Activated B cell treated with CpG ODN at 0.5 μM for 24 hours (primary cell): ENCODE measurements at regions of chr1 and their contacts with region 1.

Region 1: DNA sequence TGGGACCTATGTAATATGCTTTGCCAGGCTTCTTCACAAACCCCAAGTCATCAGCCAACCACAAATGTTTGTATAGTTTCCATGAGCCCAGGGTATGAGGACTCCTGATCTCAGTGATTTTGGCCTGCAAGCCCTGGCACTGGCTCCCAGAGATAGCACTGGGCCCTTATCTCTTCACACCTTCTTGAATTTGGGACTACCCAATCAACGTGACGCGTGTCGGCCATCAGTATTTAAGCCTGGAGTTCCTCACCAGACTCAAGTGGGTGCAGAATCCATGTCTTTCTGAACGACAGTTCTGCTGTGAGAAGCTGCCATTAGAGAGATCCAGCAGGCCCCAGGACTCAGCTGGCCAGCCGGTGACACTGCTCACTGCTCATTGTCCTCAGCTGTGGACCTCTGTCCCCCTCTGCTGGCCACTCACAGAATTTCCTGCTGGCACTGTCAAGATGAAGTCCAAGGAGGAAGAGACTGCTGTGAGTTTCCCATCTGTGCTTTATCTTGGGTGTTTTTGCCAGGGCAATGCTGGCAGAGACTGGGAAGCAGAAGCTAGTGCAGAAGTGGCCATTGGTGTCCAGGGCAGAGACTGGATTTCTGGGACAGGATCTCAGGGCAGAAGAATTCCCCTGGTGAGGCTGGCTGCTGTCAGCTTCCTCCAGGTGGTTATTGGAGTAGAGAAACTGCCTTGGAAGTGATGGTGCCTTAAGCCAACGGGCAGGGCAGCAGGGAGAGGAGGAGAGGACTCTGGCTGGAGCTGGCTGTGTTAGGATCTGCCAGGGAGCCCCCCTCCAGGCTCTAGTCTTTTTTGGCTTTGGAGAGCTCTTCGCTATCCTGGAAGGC is 28.4 kb downstream of the TMCC2 start:
- DNase-seq: peak; percentile 74
- ATAC-seq: peak; percentile 99
- H3K4me3 Mint-ChIP-seq: no peak overlapping the region
- H3K27ac Mint-ChIP-seq: no peak overlapping the region
- H3K4me1 Mint-ChIP-seq: no peaks in the 10 kb centered on the region
- H3K27me3 Mint-ChIP-seq: peaks cover 3% of the 10 kb centered on the region
- CTCF ChIP-seq: peak; percentile 98

Region 2: GRCh38 chr1:204826970-204827369 is 429.2 kb before region 1 on chr1:
- CTCF ChIA-PET with region 1: no interaction called
- POLR2A ChIA-PET with region 1: no interaction called
- intact Hi-C with region 1: loop called (anchors 2 kb)
- DNase-seq: no peak
- ATAC-seq: no peak
- H3K4me3 Mint-ChIP-seq: no peak overlapping the region
- H3K27ac Mint-ChIP-seq: no peak overlapping the region
- H3K4me1 Mint-ChIP-seq: peaks cover 8% of the 10 kb centered on the region
- H3K27me3 Mint-ChIP-seq: peaks cover 49% of the 10 kb centered on the region
- CTCF ChIP-seq: no peak

Region 3: DNA sequence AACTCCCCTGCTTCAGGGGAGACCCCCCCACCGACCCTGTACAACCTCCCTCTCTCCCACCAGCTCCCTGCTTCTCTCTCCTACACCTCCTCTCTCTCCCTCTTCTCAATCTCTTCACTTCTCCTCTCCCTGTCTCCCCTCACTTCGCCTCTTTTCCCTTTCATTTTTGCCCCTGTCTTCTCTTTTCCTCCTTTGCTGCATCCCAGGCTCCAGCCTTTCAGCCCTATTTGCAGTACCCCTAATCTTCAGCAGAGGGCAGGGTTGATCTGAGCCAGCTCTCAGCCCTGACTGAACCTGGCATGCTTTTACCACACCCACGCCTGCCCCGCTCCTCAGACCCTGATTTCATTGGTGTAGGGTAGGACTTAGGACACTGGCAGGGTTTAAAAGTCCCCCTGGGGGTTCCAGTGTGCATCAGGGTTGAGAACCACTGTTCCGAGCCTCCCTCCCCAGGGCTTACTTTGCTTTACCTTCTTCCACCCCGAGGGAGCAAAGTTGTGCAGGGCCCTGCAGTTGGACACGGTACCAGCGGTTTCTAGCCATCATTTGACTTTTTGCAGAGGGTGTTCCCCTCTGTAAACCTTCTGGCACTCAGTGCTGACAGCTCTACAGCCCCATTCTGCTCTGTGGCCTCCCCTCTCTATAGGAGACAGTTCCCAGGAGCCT is 280.5 kb before region 1 on chr1:
- CTCF ChIA-PET with region 1: interaction called, 50 read pairs
- POLR2A ChIA-PET with region 1: interaction called, 4 read pairs
- intact Hi-C with region 1: loop called (anchors 1 kb)
- DNase-seq: peak; percentile 38
- ATAC-seq: peak; percentile 90
- H3K4me3 Mint-ChIP-seq: no peak overlapping the region
- H3K27ac Mint-ChIP-seq: no peak overlapping the region
- H3K4me1 Mint-ChIP-seq: peaks cover 11% of the 10 kb centered on the region
- H3K27me3 Mint-ChIP-seq: peaks cover 24% of the 10 kb centered on the region
- CTCF ChIP-seq: no peak

Region 4: GRCh38 chr1:204989266-204990058 is 266.7 kb before region 1 on chr1:
- CTCF ChIA-PET with region 1: interaction called, 18 read pairs
- POLR2A ChIA-PET with region 1: no interaction called
- intact Hi-C with region 1: loop called (anchors 1 kb)
- DNase-seq: peak; percentile 34
- ATAC-seq: peak; percentile 78
- H3K4me3 Mint-ChIP-seq: no peak overlapping the region
- H3K27ac Mint-ChIP-seq: no peak overlapping the region
- H3K4me1 Mint-ChIP-seq: peaks cover 17% of the 10 kb centered on the region
- H3K27me3 Mint-ChIP-seq: peaks cover 7% of the 10 kb centered on the region
- CTCF ChIP-seq: no peak

Region 5: GRCh38 chr1:205061665-205062069 is 194.5 kb before region 1 on chr1:
- CTCF ChIA-PET with region 1: interaction called, 26 read pairs
- POLR2A ChIA-PET with region 1: no interaction called
- intact Hi-C with region 1: loop called (anchors 1 kb)
- DNase-seq: peak; percentile 53
- ATAC-seq: peak; percentile 61
- H3K4me3 Mint-ChIP-seq: peak overlapping the region; percentile 15
- H3K27ac Mint-ChIP-seq: no peak overlapping the region
- H3K4me1 Mint-ChIP-seq: no peaks in the 10 kb centered on the region
- H3K27me3 Mint-ChIP-seq: no peaks in the 10 kb centered on the region
- CTCF ChIP-seq: peak; percentile 51

Region 6: GRCh38 chr1:205141236-205142101 is 114.7 kb before region 1 on chr1:
- CTCF ChIA-PET with region 1: interaction called, 19 read pairs
- POLR2A ChIA-PET with region 1: no interaction called
- intact Hi-C with region 1: loop called (anchors 1 kb)
- DNase-seq: peak; percentile 47
- ATAC-seq: peak; percentile 79
- H3K4me3 Mint-ChIP-seq: no peak overlapping the region
- H3K27ac Mint-ChIP-seq: peak overlapping the region; percentile 57
- H3K4me1 Mint-ChIP-seq: peaks cover 27% of the 10 kb centered on the region
- H3K27me3 Mint-ChIP-seq: no peaks in the 10 kb centered on the region
- CTCF ChIP-seq: peak; percentile 24

Region 7: DNA sequence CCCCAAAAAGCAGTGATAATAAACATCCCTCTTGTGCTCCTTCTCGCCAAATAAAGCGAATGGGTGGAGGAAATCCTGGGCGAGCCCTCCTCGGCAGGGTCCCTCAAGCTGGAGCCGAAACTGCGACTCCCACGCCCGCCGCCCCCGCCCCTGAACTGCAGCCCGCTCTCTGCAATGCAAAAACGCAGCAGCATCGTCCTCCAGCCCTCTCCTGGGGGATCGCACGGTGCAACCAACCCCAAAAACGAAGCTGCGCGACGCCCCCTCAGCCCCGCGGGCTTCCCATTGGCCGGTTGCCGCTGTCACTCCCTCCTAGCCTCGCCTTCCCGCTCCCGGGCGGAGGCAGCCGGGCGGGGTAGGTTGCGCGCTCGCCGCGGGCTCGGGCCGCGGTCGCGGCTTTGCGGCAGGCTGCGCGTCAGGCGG is 28.6 kb before region 1 on chr1 and contains the start of gene TMCC2:
- CTCF ChIA-PET with region 1: interaction called, 66 read pairs
- POLR2A ChIA-PET with region 1: interaction called, 29 read pairs
- intact Hi-C with region 1: loop called (anchors 1 kb)
- DNase-seq: peak; percentile 73
- ATAC-seq: peak; percentile 88
- H3K4me3 Mint-ChIP-seq: peak within 1 kb of the TSS; percentile 84
- H3K27ac Mint-ChIP-seq: peak within 1 kb of the TSS; percentile 42
- H3K4me1 Mint-ChIP-seq: peaks cover 29% of the 10 kb centered on the region
- H3K27me3 Mint-ChIP-seq: peaks cover 9% of the 10 kb centered on the region
- CTCF ChIP-seq: no peak
- total RNA-seq, gene TMCC2: 1.2 and 1.4 TPM in 2 replicates

Region 8: DNA sequence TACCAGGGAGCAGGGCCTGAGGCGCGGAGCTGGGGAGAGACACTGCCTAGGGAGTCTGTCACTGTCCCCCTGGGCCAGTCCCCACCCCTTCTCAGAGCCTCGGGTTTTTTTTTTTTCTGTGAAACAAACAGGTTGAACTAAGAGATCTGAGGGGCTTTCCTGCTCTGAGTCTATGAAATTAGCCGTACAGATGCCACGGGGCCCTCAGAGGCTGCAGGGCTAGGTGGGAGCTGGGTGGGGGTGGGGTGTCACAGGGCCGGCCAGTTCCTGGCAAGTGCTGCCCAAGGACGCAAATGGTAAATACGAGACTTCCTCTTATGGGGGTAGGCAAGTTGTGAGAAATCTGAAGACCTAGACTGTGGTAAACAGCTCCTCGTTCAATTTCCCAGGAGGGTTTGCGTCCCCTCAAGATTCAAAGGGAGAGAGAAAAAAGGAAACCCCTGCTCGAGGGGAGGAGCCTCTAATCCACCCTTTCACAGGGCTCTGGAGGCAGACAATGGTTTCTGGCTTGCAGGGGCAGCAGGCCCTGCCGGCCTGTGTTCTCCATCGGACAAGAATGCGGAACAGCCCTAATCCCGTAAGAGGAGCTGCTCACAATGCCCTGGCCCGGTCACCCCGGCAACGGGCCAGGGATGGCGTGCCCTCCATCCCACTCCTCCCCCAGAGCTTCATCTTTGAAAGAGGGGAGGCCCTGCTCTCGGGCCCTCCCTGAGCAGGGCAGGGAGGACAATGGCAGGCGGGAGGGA is 57.6 kb after region 1 on chr1:
- CTCF ChIA-PET with region 1: no interaction called
- POLR2A ChIA-PET with region 1: no interaction called
- intact Hi-C with region 1: no loop called
- DNase-seq: peak; percentile 55
- ATAC-seq: peak; percentile 82
- H3K4me3 Mint-ChIP-seq: peak overlapping the region; percentile 85
- H3K27ac Mint-ChIP-seq: peak overlapping the region; percentile 98
- H3K4me1 Mint-ChIP-seq: peaks cover 95% of the 10 kb centered on the region
- H3K27me3 Mint-ChIP-seq: no peaks in the 10 kb centered on the region
- CTCF ChIP-seq: no peak